ENCODE measurements at regions of chr3 and their contacts with region 1.

Region 1: DNA sequence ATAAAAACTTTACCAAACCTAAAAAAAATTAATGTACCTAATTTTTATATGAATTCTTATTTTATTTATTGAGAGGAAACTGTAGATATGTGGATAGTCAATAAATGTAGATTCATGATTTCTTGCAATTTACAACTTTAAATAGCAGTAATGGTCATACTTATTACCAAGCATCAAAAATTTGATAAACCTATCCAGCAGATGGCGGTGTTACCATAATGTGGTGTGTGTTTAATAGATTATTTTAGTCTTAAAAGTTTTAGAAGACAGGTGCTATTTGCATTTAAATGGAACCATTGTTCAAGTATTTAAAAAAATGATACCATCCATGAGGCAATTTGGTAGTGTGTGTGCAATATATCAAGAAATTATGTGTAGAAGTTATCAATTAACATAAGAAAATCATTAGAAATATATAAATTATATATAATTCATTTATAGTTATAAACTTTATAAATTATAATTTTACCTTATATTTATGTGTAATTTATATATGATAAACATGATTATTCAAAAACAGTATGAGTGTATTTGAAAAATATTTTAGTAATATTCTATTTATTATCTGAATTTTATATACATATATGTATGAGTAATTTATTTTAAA is 176.0 kb upstream of the BCHE start:
- DNase-seq: peak; percentile 70
- H3K4me3 Mint-ChIP-seq: no peak overlapping the region
- H3K27ac Mint-ChIP-seq: no peak overlapping the region
- H3K4me1 Mint-ChIP-seq: no peaks in the 10 kb centered on the region
- H3K27me3 Mint-ChIP-seq: no peaks in the 10 kb centered on the region
- CTCF ChIP-seq: peak; percentile 53

Region 2: GRCh38 chr3:165254812-165255211 is 758.4 kb before region 1 on chr3:
- CTCF ChIA-PET with region 1: interaction called, 5 read pairs
- POLR2A ChIA-PET with region 1: no interaction called
- intact Hi-C with region 1: loop called (anchors 2 kb)
- DNase-seq: peak; percentile 80
- H3K4me3 Mint-ChIP-seq: no peak overlapping the region
- H3K27ac Mint-ChIP-seq: peak overlapping the region; percentile 25
- H3K4me1 Mint-ChIP-seq: peaks cover 10% of the 10 kb centered on the region
- H3K27me3 Mint-ChIP-seq: no peaks in the 10 kb centered on the region
- CTCF ChIP-seq: peak; percentile 71

Region 3: DNA sequence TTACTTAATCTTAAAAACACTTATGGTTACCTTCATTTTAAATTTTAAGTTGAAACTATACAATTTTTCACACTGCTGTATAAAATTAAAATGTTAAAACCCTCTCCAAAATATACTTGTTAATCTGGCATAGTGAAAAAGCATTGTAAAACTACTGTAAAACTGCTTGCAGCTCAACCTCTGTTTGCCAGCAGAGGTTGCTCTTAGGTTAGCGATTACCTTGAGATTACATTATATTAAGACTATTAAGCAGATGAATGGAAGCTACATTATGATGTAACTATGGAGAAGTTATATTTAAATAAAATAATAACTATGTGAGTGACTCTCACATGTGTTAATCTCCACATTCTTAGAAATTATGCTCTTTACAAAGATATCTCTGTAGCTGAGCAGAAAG is 673.4 kb before region 1 on chr3:
- CTCF ChIA-PET with region 1: no interaction called
- POLR2A ChIA-PET with region 1: interaction called, 3 read pairs
- intact Hi-C with region 1: loop called (anchors 5 kb)
- DNase-seq: peak; percentile 45
- H3K4me3 Mint-ChIP-seq: no peak overlapping the region
- H3K27ac Mint-ChIP-seq: no peak overlapping the region
- H3K4me1 Mint-ChIP-seq: no peaks in the 10 kb centered on the region
- H3K27me3 Mint-ChIP-seq: no peaks in the 10 kb centered on the region
- CTCF ChIP-seq: peak; percentile 53

Region 4: GRCh38 chr3:165903901-165904630 is 109.1 kb before region 1 on chr3:
- CTCF ChIA-PET with region 1: no interaction called
- POLR2A ChIA-PET with region 1: no interaction called
- intact Hi-C with region 1: no loop called
- DNase-seq: peak; percentile 34
- H3K4me3 Mint-ChIP-seq: no peak overlapping the region
- H3K27ac Mint-ChIP-seq: no peak overlapping the region
- H3K4me1 Mint-ChIP-seq: no peaks in the 10 kb centered on the region
- H3K27me3 Mint-ChIP-seq: no peaks in the 10 kb centered on the region
- CTCF ChIP-seq: no peak

Region 5: GRCh38 chr3:166902374-166902773 is 889.2 kb after region 1 on chr3:
- CTCF ChIA-PET with region 1: interaction called, 5 read pairs
- POLR2A ChIA-PET with region 1: no interaction called
- intact Hi-C with region 1: loop called (anchors 2 kb)
- DNase-seq: no peak
- H3K4me3 Mint-ChIP-seq: no peak overlapping the region
- H3K27ac Mint-ChIP-seq: no peak overlapping the region
- H3K4me1 Mint-ChIP-seq: peaks cover 7% of the 10 kb centered on the region
- H3K27me3 Mint-ChIP-seq: no peaks in the 10 kb centered on the region
- CTCF ChIP-seq: peak; percentile 18

Region 6: GRCh38 chr3:167350245-167350862 is 1337.2 kb after region 1 on chr3:
- CTCF ChIA-PET with region 1: no interaction called
- POLR2A ChIA-PET with region 1: no interaction called
- intact Hi-C with region 1: loop called (anchors 2 kb)
- DNase-seq: peak; percentile 64
- H3K4me3 Mint-ChIP-seq: no peak overlapping the region
- H3K27ac Mint-ChIP-seq: no peak overlapping the region
- H3K4me1 Mint-ChIP-seq: no peaks in the 10 kb centered on the region
- H3K27me3 Mint-ChIP-seq: no peaks in the 10 kb centered on the region
- CTCF ChIP-seq: peak; percentile 76

Region 7: GRCh38 chr3:167467848-167468611 is 1454.9 kb after region 1 on chr3:
- CTCF ChIA-PET with region 1: no interaction called
- POLR2A ChIA-PET with region 1: no interaction called
- intact Hi-C with region 1: no loop called
- DNase-seq: no peak
- H3K4me3 Mint-ChIP-seq: no peak overlapping the region
- H3K27ac Mint-ChIP-seq: no peak overlapping the region
- H3K4me1 Mint-ChIP-seq: no peaks in the 10 kb centered on the region
- H3K27me3 Mint-ChIP-seq: peaks cover 23% of the 10 kb centered on the region
- CTCF ChIP-seq: no peak

Measured in MCF 10A (cell line).